BJ (cell line): ENCODE measurements at regions of chr21 and their contacts with region 1.

Region 1: DNA sequence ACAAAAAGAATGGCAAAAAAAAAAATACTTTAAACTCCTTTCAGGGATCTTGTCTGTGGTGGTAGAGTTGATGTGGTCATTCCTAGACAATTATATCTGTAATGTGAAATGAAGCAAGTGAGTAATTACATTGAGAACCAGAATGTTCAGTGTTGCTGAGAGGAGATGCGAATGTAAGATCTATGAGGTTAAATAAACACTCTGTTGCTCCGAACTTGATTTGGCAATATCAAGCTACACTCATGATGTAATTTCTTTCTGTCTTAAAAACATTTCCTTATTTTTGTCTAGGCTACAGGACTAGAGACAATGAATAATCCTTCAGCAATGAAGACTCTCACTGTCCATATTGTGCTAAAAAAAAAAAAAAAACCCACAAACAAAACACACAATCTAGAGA is 63.2 kb upstream of the IGSF5 start:
- DNase-seq: peak; percentile 51
- H3K4me3 ChIP-seq: no peak overlapping the region
- H3K27me3 ChIP-seq: no peaks in the 10 kb centered on the region
- CTCF ChIP-seq: no peak

Region 2: DNA sequence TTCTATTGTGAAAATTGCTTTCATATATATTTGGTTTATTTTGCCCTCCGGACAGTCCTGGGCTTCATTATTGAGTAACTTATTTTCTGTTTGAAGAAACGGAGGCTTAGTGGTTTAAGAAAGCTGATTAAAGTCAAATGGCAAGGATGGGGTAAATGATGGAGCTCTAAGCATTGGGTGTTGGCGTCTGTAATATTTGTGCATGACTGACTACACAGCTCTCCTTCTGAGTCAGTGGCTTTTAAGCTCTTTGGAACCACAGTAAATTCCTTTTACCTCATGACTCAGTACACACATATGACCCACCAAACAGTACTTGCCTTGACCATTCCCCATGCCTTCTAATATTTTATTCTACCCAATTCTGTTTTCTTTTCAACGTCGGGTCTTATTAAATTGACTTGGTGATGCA is 48.1 kb before region 1 on chr21:
- CTCF ChIA-PET with region 1: no interaction called
- POLR2A ChIA-PET with region 1: interaction called, 13 read pairs
- DNase-seq: peak; percentile 95
- H3K4me3 ChIP-seq: no peak overlapping the region
- H3K27me3 ChIP-seq: no peaks in the 10 kb centered on the region
- CTCF ChIP-seq: no peak

Region 3: DNA sequence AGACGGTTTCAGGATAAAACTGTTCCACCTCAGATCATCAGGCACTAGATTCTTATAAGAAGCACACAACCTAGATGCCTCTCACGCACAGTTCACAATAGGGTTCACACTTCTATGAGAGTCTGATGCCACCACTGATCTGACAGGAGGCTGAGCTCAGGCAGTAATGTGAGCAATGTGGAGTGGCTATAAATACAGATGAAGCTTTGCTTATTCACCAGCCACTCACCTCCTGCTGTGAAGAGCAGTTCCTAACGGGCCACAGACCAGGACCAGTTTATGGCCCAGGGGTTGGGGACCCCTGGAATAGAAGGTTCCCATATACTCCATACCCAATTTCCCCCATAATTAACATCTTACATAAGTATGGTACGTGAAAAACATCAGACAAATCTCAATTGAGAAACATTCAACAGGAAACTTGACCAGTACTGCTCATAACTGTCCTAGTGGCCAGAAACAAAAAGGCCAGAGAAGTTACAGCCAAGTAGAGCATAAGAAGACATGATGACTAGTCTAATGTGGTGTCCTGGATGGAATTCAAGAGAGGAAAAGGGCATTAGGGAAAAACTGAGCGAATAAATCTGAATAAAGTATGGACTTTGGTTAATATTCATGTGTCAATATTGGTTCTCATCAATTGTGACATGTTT is 38.4 kb after region 1 on chr21:
- CTCF ChIA-PET with region 1: no interaction called
- POLR2A ChIA-PET with region 1: no interaction called
- DNase-seq: no peak
- H3K4me3 ChIP-seq: no peak overlapping the region
- H3K27me3 ChIP-seq: no peaks in the 10 kb centered on the region
- CTCF ChIP-seq: no peak

Region 4: DNA sequence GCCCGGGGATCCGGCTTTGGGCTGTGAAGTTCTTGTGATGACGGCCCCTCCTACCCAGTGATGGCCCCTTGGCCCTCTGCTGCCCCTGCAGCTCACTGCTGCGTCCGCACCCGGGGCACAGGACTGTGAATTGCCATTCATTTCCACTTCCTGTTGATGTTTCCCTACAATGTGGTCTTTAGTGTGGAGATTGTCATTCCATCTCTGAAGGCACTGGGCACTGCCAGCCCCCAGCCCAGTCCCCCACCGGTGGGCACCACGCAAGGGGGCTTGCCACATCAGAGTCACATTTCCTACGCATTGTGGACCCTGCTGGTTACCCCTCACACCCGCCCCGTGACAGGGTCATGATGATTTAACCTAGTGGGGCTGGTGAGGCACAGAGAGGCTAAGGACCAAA is 1677.5 kb after region 1 on chr21:
- CTCF ChIA-PET with region 1: no interaction called
- POLR2A ChIA-PET with region 1: no interaction called
- DNase-seq: no peak
- H3K4me3 ChIP-seq: no peak overlapping the region
- H3K27me3 ChIP-seq: peaks cover 10% of the 10 kb centered on the region
- CTCF ChIP-seq: no peak